ENCODE measurements at regions of chr1 and their contacts with region 1.

Region 1: DNA sequence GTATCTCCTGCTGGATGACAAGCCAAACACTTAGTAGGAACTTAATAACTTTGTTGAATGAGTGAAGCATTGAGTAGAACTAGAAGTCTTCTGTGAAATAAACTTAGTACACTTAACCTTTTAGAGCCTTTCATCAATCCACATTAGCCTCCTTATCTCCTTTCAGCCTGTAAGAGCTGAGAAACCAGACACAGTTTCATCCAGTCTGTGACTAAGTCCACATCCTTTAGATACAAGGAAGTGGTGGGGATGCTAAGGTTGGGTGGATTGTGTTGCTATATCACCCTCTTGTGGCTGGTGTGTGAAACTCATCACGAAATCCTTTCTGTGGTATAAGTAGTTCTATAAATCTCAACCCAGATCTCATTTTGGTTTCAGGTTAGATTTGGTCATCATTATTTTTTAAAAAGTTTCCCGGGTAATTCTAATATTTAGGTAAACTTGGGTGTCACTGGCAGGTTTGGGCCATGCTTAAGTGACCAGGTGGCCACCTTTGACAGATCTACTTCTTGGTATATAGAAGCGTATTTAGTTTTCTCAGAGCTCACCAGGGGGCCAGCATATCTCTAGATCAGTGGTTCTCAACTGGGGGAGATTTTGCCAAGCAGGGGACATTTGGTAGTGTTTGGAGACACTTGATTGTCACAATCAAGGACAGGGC is 27.8 kb upstream of the CD84 start:
- DNase-seq: peak in 7 of 9 donors; percentile 71 to 85 (median 80)
- ATAC-seq: peak; percentile 99
- H3K4me3 ChIP-seq: no peak overlapping the region
- H3K4me3 Mint-ChIP-seq: peak overlapping the region in 8 of 10 donors; percentile 30 to 60 (median 53)
- H3K27ac ChIP-seq: no peak overlapping the region
- H3K27ac Mint-ChIP-seq: peak overlapping the region; percentile 52 to 85 (median 81)
- H3K4me1 ChIP-seq: peaks cover 6 to 15% of the 10 kb centered on the region in 2 donors
- H3K4me1 Mint-ChIP-seq: peaks cover 22 to 60% (median 39%) of the 10 kb centered on the region in 7 donors
- H3K27me3 ChIP-seq: no peaks in the 10 kb centered on the region
- H3K27me3 Mint-ChIP-seq: no peaks in the 10 kb centered on the region

Region 2: DNA sequence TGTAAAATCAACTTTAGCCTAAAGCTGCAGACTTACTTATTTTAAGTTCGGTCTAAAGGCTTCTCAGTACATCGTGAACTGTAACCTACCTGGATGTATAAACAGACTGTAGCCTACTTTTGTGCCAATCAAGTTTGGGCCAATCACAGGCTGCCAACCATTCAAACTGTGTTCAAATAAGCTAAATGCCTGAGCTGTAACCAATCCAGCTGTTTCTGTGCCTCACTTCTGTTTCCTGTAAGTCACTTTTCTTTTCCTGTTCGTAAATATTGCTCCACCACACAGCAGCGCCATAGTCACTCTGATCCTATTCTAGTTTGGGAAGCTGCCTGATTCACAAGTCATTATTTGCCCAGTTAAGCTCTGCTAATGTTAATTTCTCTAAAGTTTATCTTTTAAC is 615.6 kb before region 1 on chr1:
- CTCF ChIA-PET with region 1: no interaction called
- POLR2A ChIA-PET with region 1: no interaction called
- intact Hi-C with region 1: no loop called
- DNase-seq: peak in 5 of 9 donors; percentile 4 to 18 (median 14)
- ATAC-seq: peak; percentile 74
- H3K4me3 ChIP-seq: no peak overlapping the region
- H3K4me3 Mint-ChIP-seq: peak overlapping the region in 3 of 10 donors; percentile 2 to 37 (median 3)
- H3K27ac ChIP-seq: no peak overlapping the region
- H3K27ac Mint-ChIP-seq: no peak overlapping the region
- H3K4me1 ChIP-seq: no peaks in the 10 kb centered on the region
- H3K4me1 Mint-ChIP-seq: peaks cover 0 to 8% (median 7%) of the 10 kb centered on the region in 7 donors
- H3K27me3 ChIP-seq: no peaks in the 10 kb centered on the region
- H3K27me3 Mint-ChIP-seq: peaks cover 5 to 39% (median 11%) of the 10 kb centered on the region in 5 donors

Region 3: GRCh38 chr1:160291248-160292220 is 315.6 kb before region 1 on chr1:
- CTCF ChIA-PET with region 1: no interaction called
- POLR2A ChIA-PET with region 1: interaction called, 3 read pairs
- intact Hi-C with region 1: loop called in 1 of 2 experiments (anchors 1 kb)
- DNase-seq: peak; percentile 24 to 82 (median 74)
- ATAC-seq: peak; percentile 98
- H3K4me3 ChIP-seq: no peak overlapping the region
- H3K4me3 Mint-ChIP-seq: no peak overlapping the region
- H3K27ac ChIP-seq: no peak overlapping the region
- H3K27ac Mint-ChIP-seq: peak overlapping the region; percentile 0 to 88 (median 40)
- H3K4me1 ChIP-seq: peaks cover 0 to 3% of the 10 kb centered on the region in 2 donors
- H3K4me1 Mint-ChIP-seq: peaks cover 2 to 7% (median 6%) of the 10 kb centered on the region in 7 donors
- H3K27me3 ChIP-seq: no peaks in the 10 kb centered on the region
- H3K27me3 Mint-ChIP-seq: no peaks in the 10 kb centered on the region

Region 4: GRCh38 chr1:160376525-160377131 is 230.5 kb before region 1 on chr1:
- CTCF ChIA-PET with region 1: no interaction called
- POLR2A ChIA-PET with region 1: no interaction called
- intact Hi-C with region 1: loop called in 1 of 2 experiments (anchors 1 kb)
- DNase-seq: peak in 6 of 9 donors; percentile 21 to 45 (median 36)
- ATAC-seq: peak; percentile 73
- H3K4me3 ChIP-seq: no peak overlapping the region
- H3K4me3 Mint-ChIP-seq: peak overlapping the region in 5 of 10 donors; percentile 5 to 54 (median 15)
- H3K27ac ChIP-seq: no peak overlapping the region
- H3K27ac Mint-ChIP-seq: peak overlapping the region in 2 of 9 donors; percentile 4 to 37
- H3K4me1 ChIP-seq: peaks cover 8 to 11% of the 10 kb centered on the region in 2 donors
- H3K4me1 Mint-ChIP-seq: peaks cover 7 to 19% (median 14%) of the 10 kb centered on the region in 7 donors
- H3K27me3 ChIP-seq: no peaks in the 10 kb centered on the region
- H3K27me3 Mint-ChIP-seq: peaks cover 0 to 7% (median 0%) of the 10 kb centered on the region in 5 donors

Region 5: DNA sequence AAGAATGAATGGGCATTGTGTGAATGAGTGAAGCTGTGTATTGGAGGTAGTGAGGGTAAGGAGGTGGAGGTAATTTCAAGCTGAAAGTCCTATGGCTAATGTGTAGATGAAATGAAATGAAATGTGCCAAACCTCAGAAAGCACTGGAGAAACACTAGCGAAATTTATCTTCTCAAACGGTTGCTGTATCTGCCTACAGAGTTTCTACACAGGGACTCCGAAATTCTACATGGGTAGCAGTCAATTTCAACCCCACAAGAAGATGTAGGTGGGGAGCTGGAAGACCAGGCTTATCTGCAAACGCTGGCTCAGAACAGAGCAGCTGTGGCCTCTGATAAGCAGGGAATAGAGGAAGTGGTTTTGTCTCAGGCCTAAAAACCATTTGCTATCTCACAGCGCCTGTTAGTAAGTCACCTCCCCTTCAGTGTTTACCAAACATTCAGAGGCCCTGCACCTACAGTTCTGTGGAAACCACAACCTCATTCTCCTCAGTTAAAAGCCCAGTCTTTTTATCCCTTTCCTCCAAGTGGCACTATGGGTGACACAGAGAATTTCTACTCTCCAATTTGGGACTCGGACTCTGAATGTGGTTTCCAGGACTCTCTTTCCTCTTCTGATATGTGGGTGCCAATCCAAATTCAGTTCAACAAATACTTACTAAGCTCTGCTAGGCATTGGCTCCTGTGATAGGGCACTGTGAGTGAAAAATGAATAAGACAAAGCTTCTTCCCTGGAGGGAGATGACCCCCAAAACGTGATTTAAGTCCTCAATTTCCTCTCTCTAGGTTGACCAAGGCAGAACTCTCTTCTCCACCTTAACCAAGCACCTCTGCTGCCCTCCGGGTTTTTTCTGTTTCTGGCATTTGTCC is 66.9 kb before region 1 on chr1:
- CTCF ChIA-PET with region 1: interaction called, 71 read pairs
- POLR2A ChIA-PET with region 1: interaction called, 5 read pairs
- intact Hi-C with region 1: loop called (anchors 1 kb)
- DNase-seq: peak in 8 of 9 donors; percentile 43 to 69 (median 54)
- ATAC-seq: peak; percentile 96
- H3K4me3 ChIP-seq: peak overlapping the region; percentile 23
- H3K4me3 Mint-ChIP-seq: peak overlapping the region; percentile 40 to 79 (median 64)
- H3K27ac ChIP-seq: peak overlapping the region; percentile 65
- H3K27ac Mint-ChIP-seq: peak overlapping the region; percentile 64 to 97 (median 91)
- H3K4me1 ChIP-seq: peaks cover 45 to 54% of the 10 kb centered on the region in 2 donors
- H3K4me1 Mint-ChIP-seq: peaks cover 46 to 63% (median 55%) of the 10 kb centered on the region in 7 donors
- H3K27me3 ChIP-seq: no peaks in the 10 kb centered on the region
- H3K27me3 Mint-ChIP-seq: no peaks in the 10 kb centered on the region

Region 6: DNA sequence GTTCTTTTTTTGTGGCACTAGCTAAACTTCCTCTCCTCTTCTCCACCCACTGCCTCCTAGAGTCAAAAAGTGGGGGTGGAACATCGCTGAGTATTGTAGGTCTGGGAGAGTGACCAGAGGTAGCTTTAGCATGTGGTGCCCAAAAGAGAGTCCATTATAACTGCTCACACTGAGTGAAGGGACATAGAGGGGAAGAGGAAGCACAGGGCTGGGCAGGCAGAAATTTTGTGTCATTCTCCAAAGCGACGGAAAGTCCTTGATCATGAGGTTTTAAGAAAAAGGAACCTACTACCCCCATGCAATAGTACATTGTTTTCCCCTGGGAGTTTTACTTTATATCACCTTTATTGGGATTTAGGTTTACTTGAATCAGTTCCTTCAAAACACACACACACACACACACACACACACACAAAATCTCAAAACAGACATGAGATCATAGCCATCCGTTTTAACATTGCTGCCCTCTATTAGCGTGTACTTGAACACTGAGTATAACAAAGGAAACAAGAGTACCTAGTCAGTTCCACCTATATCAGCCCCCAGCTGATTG is 32.0 kb before region 1 on chr1:
- CTCF ChIA-PET with region 1: interaction called, 7 read pairs
- POLR2A ChIA-PET with region 1: interaction called, 4 read pairs
- intact Hi-C with region 1: loop called in 1 of 2 experiments (anchors 1 kb)
- DNase-seq: peak in 1 of 9 donors; percentile 23
- ATAC-seq: peak; percentile 67
- H3K4me3 ChIP-seq: peak overlapping the region; percentile 66
- H3K4me3 Mint-ChIP-seq: peak overlapping the region; percentile 71 to 97 (median 86)
- H3K27ac ChIP-seq: peak overlapping the region; percentile 79
- H3K27ac Mint-ChIP-seq: peak overlapping the region; percentile 52 to 97 (median 94)
- H3K4me1 ChIP-seq: peaks cover 55 to 86% of the 10 kb centered on the region in 2 donors
- H3K4me1 Mint-ChIP-seq: peaks cover 69 to 100% (median 94%) of the 10 kb centered on the region in 7 donors
- H3K27me3 ChIP-seq: no peaks in the 10 kb centered on the region
- H3K27me3 Mint-ChIP-seq: no peaks in the 10 kb centered on the region

Region 7: DNA sequence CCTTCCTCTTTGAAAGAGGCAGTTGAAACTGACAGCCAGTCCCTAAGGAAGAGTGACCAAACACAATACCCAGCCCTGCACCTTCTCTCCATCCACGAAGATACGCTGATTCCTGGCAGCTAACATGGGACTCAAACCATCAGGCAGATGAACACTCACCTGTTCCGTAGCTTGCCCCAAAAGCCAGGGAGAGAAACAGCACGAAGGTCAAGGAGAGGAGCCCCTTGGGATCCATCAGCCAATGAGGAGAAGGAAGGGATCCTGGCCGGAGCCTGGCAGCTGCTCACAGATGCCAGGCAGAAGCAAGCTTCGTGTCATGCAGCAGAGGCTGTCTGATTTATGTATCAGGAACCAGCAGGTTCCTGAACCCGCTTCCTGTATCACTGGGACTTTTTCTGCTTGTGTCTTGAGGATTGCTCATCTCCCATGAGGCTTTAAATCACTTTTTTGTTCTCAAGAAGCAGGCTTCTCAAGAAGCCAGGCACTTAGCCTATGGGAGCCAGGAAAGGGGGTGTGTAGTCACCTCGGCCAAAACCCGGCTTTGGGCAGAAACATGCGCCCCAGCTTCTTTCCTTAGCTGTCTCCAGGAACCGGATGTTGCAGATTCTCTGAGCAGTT is 39.7 kb after region 1 on chr1 and contains the start of gene SLAMF1:
- CTCF ChIA-PET with region 1: interaction called, 12 read pairs
- POLR2A ChIA-PET with region 1: interaction called, 3 read pairs
- intact Hi-C with region 1: no loop called
- DNase-seq: peak in 8 of 9 donors; percentile 45 to 65 (median 52)
- ATAC-seq: peak; percentile 83
- H3K4me3 ChIP-seq: peak within 1 kb of the TSS; percentile 86
- H3K4me3 Mint-ChIP-seq: peak within 1 kb of the TSS; percentile 91 to 100 (median 95)
- H3K27ac ChIP-seq: peak within 1 kb of the TSS; percentile 89
- H3K27ac Mint-ChIP-seq: peak within 1 kb of the TSS; percentile 89 to 95 (median 94)
- H3K4me1 ChIP-seq: peaks cover 26 to 52% of the 10 kb centered on the region in 2 donors
- H3K4me1 Mint-ChIP-seq: peaks cover 46 to 92% (median 74%) of the 10 kb centered on the region in 7 donors
- H3K27me3 ChIP-seq: no peaks in the 10 kb centered on the region
- H3K27me3 Mint-ChIP-seq: no peaks in the 10 kb centered on the region
- total RNA-seq, gene SLAMF1: 18.3 to 90.3 (median 31.9) TPM

Measured in naive thymus-derived CD4-positive, alpha-beta T cell (primary cell).